Activated CD8-positive, alpha-beta T cell treated with anti-CD3 and anti-CD28 coated beads for 36 hours (primary cell): ENCODE measurements at regions of chr20 and their contacts with region 1.

Region 1: GRCh38 chr20:58192567-58192966 is 35.9 kb downstream of the ANKRD60 start:
- DNase-seq: peak; percentile 58
- ATAC-seq: peak; percentile 60
- H3K4me3 Mint-ChIP-seq: no peak overlapping the region
- H3K27ac Mint-ChIP-seq: no peak overlapping the region
- H3K4me1 Mint-ChIP-seq: no peaks in the 10 kb centered on the region
- H3K27me3 Mint-ChIP-seq: peaks cover 14% of the 10 kb centered on the region
- CTCF ChIP-seq: peak; percentile 77

Region 2: DNA sequence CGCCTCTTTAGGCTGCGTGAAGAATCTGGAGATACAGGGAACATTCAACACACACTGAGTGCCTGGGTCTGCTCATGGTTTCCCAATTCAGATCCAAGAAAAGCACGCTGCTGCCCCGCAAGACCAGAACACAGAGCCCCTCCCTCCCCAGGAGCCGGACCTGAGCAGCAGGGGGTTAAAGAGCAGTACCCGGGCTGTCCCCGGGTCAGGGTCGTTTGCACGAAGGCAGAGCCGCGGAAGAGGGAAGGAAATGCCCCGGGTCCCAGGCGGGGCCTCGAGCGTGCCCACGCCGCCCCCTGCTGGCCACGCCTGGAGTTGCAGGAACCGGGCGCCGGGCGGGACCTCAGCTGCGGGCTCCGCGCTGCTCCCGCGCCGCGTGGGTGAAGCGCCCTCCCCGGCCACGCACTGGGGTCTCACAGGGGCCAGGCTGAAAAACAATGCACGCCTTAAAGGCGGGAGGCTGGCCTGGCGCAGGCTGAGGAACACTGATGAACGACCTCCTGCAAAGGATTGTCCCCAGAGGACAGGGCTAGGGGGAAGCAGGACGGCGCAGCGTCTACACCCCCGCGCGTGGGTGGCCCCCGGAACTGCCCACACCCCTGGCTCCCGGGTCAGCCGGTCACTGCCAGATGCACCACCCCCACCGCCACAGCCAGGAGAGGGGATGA is 13.0 kb before region 1 on chr20:
- CTCF ChIA-PET with region 1: interaction called, 26 read pairs
- POLR2A ChIA-PET with region 1: no interaction called
- intact Hi-C with region 1: no loop called
- DNase-seq: peak; percentile 64
- ATAC-seq: peak; percentile 94
- H3K4me3 Mint-ChIP-seq: peak overlapping the region; percentile 11
- H3K27ac Mint-ChIP-seq: no peak overlapping the region
- H3K4me1 Mint-ChIP-seq: peaks cover 5% of the 10 kb centered on the region
- H3K27me3 Mint-ChIP-seq: peaks cover 26% of the 10 kb centered on the region
- CTCF ChIP-seq: peak; percentile 98

Region 3: GRCh38 chr20:58209652-58210397 is 17.3 kb after region 1 on chr20:
- CTCF ChIA-PET with region 1: interaction called, 16 read pairs
- POLR2A ChIA-PET with region 1: no interaction called
- intact Hi-C with region 1: no loop called
- DNase-seq: peak; percentile 90
- ATAC-seq: peak; percentile 92
- H3K4me3 Mint-ChIP-seq: no peak overlapping the region
- H3K27ac Mint-ChIP-seq: peak overlapping the region; percentile 59
- H3K4me1 Mint-ChIP-seq: no peaks in the 10 kb centered on the region
- H3K27me3 Mint-ChIP-seq: peaks cover 2% of the 10 kb centered on the region
- CTCF ChIP-seq: peak; percentile 100

Region 4: DNA sequence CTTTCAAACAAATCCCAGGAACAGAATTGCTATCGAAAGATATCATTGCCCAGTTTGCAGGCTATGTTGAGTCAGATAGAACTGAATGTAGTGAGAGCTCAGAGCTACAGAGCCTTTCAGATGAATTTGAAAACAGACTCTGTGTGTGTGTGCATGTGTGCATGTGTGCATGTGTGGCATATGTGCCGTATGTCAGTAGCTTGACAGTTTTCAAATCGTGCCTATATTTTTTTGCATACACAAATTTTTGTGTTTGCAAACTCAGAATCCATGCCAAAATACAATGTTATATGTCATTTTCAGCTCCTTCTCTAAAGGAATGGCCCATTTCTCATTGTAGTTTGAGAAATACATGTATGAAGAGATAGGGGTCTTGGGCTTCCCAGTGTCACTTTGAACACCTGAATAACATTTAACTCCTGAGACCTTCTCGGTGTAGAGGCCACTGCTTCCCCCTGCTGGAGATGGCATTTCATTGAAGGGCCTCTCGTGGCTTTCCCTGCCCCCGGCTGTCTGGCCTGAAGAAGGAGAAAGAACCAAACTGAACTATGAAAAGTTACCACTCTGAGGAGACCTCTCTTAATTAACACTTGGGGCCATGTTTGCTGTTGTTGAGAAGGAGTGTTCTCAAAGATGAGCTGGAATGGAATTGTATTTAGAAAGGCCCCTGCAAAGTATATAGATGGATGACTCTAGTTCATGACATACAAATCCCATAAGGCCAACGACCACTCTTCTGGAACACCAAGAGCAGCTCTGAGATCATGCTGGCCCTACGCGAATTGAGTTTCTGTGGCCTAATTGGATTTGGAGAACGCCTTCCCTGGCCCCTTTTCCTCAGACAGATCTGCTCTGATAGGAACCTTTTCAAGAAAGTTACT is 255.2 kb after region 1 on chr20:
- CTCF ChIA-PET with region 1: no interaction called
- POLR2A ChIA-PET with region 1: no interaction called
- intact Hi-C with region 1: no loop called
- DNase-seq: peak; percentile 72
- ATAC-seq: peak; percentile 82
- H3K4me3 Mint-ChIP-seq: no peak overlapping the region
- H3K27ac Mint-ChIP-seq: peak overlapping the region; percentile 22
- H3K4me1 Mint-ChIP-seq: peaks cover 4% of the 10 kb centered on the region
- H3K27me3 Mint-ChIP-seq: no peaks in the 10 kb centered on the region
- CTCF ChIP-seq: peak; percentile 53